ENCODE measurements at regions of chr9 and their contacts with region 1.

Region 1: DNA sequence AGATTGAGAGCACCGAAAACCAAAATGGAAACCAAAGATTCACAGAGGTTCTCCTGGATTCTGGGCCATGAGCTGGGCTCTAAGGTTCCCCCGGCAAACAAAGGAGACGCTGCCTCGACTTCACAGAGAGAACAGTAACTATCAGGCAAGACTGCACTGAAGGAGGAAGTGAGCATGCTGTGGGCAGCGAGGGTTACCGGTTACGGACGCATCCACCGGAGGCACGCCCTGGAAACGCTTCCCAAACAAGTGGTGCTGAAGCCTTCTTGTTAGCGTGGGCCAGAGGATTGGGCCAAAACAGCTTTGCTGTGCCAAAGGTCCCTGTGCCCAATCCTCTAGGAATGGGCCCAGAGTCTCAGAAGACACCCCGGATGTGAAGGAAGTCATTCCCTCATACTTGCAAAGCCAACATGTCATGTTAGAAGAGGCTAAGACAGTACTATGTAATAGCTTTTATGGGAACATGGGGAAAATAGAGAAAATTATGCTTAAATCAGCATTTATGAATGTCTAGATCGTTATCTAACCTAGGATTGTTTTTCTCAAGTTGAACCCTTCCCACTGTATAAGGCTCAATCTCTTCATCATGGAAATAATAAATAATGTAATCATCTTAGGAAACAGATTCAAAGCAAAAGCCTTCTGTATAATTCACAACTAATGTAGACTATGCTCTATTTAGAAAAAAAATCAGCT is 145.4 kb downstream of the GABBR2 start:
- DNase-seq: peak; percentile 78
- H3K4me3 ChIP-seq: no peak overlapping the region
- H3K27ac ChIP-seq: no peak overlapping the region
- H3K4me1 ChIP-seq: no peaks in the 10 kb centered on the region
- H3K27me3 ChIP-seq: no peaks in the 10 kb centered on the region
- CTCF ChIP-seq: no peak
- EP300 ChIP-seq: no peak
- POLR2A ChIP-seq: no peak

Region 2: GRCh38 chr9:97359147-97359546 is 1204.2 kb before region 1 on chr9:
- intact Hi-C with region 1: loop called (anchors 5 kb)
- DNase-seq: no peak
- H3K4me3 ChIP-seq: no peak overlapping the region
- H3K27ac ChIP-seq: no peak overlapping the region
- H3K4me1 ChIP-seq: no peaks in the 10 kb centered on the region
- H3K27me3 ChIP-seq: no peaks in the 10 kb centered on the region
- CTCF ChIP-seq: no peak
- EP300 ChIP-seq: no peak
- POLR2A ChIP-seq: no peak

Region 3: GRCh38 chr9:98357921-98358535 is 205.3 kb before region 1 on chr9:
- intact Hi-C with region 1: no loop called
- DNase-seq: peak; percentile 90
- H3K4me3 ChIP-seq: no peak overlapping the region
- H3K27ac ChIP-seq: no peak overlapping the region
- H3K4me1 ChIP-seq: no peaks in the 10 kb centered on the region
- H3K27me3 ChIP-seq: peaks cover 0 to 6% (median 0%) of the 10 kb centered on the region in 4 donors
- CTCF ChIP-seq: no peak
- EP300 ChIP-seq: no peak
- POLR2A ChIP-seq: no peak

Region 4: GRCh38 chr9:98686961-98687855 is 123.8 kb after region 1 on chr9:
- intact Hi-C with region 1: no loop called
- DNase-seq: no peak
- H3K4me3 ChIP-seq: no peak overlapping the region
- H3K27ac ChIP-seq: no peak overlapping the region
- H3K4me1 ChIP-seq: no peaks in the 10 kb centered on the region
- H3K27me3 ChIP-seq: no peaks in the 10 kb centered on the region
- CTCF ChIP-seq: no peak
- EP300 ChIP-seq: no peak
- POLR2A ChIP-seq: no peak

Measured in esophagus muscularis mucosa (tissue), 4 donors.